CD4-positive, alpha-beta memory T cell (primary cell): ENCODE measurements at regions of chr19 and their contacts with region 1.

Region 1: DNA sequence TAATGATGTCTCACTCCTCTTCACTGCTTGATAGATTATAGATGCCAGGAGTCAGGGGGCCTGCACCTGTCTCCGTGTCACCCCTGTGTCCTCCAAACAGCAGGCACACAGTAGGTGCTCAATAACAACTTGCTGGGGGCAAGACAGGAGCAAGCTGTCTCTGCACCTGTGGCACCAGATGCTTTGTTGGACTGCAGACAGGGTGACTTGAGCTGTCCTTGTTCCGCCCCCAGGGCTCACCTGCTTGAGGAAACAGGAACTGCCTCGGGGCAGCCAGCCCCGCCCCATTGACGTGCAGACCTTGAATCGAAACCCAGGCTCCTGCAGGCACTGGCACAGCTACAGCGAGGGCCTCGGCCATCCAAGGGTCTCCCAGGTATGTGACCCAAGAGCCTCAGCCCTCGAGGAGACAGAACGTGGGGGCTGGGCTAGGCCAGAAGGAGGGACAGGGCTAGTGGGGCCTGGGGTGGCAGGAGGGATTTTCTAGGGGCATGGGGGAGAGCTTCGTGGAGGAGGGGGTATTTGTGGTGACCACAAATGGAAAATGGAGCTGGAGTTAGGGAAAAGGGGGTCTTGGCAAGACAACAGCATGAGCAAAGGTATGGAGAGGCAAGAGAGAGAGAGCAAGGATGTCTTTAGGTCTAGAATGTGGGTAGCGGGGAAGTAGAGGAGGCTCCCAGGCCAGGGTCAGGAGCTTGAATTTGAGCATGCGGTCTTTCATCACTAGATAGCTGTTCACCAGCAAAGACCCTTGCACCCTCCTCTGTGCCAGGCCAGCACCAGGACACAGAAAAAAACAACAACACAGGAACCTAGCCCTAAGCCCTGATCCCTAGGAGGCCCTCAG is at the start of gene HSH2D:
- DNase-seq: peak; percentile 76 to 87 (median 79)
- H3K4me3 ChIP-seq: peak within 1 kb of the TSS; percentile 74 to 84
- H3K4me3 Mint-ChIP-seq: peak within 1 kb of the TSS; percentile 91 to 97 (median 95)
- H3K27ac ChIP-seq: peak within 1 kb of the TSS; percentile 82
- H3K27ac Mint-ChIP-seq: peak within 1 kb of the TSS; percentile 83 to 99 (median 96)
- H3K4me1 ChIP-seq: peaks cover 42% of the 10 kb centered on the region
- H3K4me1 Mint-ChIP-seq: peaks cover 20 to 51% (median 33%) of the 10 kb centered on the region in 4 donors
- H3K27me3 ChIP-seq: no peaks in the 10 kb centered on the region
- H3K27me3 Mint-ChIP-seq: no peaks in the 10 kb centered on the region
- total RNA-seq, gene HSH2D: 17.8 to 18.8 TPM

Region 2: GRCh38 chr19:16118489-16119033 is 25.1 kb before region 1 on chr19:
- CTCF ChIA-PET with region 1: interaction called, 4 read pairs
- POLR2A ChIA-PET with region 1: interaction called, 6 read pairs
- intact Hi-C with region 1: loop called (anchors 2 kb)
- DNase-seq: no peak
- H3K4me3 ChIP-seq: peak overlapping the region in 1 of 2 donors; percentile 12
- H3K4me3 Mint-ChIP-seq: peak overlapping the region in 7 of 8 donors; percentile 54 to 93 (median 65)
- H3K27ac ChIP-seq: peak overlapping the region; percentile 49
- H3K27ac Mint-ChIP-seq: peak overlapping the region; percentile 80 to 97 (median 94)
- H3K4me1 ChIP-seq: peaks cover 56% of the 10 kb centered on the region
- H3K4me1 Mint-ChIP-seq: peaks cover 28 to 59% (median 48%) of the 10 kb centered on the region in 4 donors
- H3K27me3 ChIP-seq: no peaks in the 10 kb centered on the region
- H3K27me3 Mint-ChIP-seq: no peaks in the 10 kb centered on the region

Region 3: GRCh38 chr19:16301999-16302694 is 158.5 kb after region 1 on chr19:
- CTCF ChIA-PET with region 1: no interaction called
- POLR2A ChIA-PET with region 1: no interaction called
- intact Hi-C with region 1: no loop called
- DNase-seq: no peak
- H3K4me3 ChIP-seq: no peak overlapping the region
- H3K4me3 Mint-ChIP-seq: no peak overlapping the region
- H3K27ac ChIP-seq: no peak overlapping the region
- H3K27ac Mint-ChIP-seq: no peak overlapping the region
- H3K4me1 ChIP-seq: no peaks in the 10 kb centered on the region
- H3K4me1 Mint-ChIP-seq: no peaks in the 10 kb centered on the region
- H3K27me3 ChIP-seq: no peaks in the 10 kb centered on the region
- H3K27me3 Mint-ChIP-seq: no peaks in the 10 kb centered on the region